Uterus (tissue), 4 donors: ENCODE measurements at regions of chr22 and their contacts with region 1.

Region 1: GRCh38 chr22:27654546-27655445 is 146.8 kb downstream of the MN1 start:
- DNase-seq: no peak
- H3K4me3 ChIP-seq: no peak overlapping the region
- H3K27ac ChIP-seq: no peak overlapping the region
- H3K4me1 ChIP-seq: no peaks in the 10 kb centered on the region
- H3K27me3 ChIP-seq: no peaks in the 10 kb centered on the region
- CTCF ChIP-seq: no peak
- POLR2A ChIP-seq: no peak

Region 2: DNA sequence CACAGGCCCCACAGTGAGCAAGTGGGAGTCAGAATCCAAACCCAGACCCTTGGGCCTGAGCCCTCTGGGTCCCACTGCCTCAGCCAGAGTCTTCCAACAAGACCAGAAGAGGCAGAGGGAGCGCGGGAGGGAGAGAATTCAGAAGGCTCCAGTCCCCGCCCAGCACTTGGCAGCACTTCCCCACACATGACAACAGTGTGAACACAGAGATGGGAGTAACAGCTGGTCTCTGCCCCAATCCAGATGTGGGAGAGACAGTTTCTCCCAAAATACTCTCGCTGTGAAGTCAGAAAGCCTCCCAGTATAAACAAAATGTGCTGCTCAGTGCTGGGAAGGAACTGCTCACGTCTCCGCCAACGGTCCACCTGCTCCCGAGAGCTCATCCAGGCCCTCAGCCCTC is 73.1 kb before region 1 on chr22:
- intact Hi-C with region 1: no loop called
- DNase-seq: peak; percentile 77 to 87
- H3K4me3 ChIP-seq: no peak overlapping the region
- H3K27ac ChIP-seq: peak overlapping the region in 1 of 2 donors; percentile 48
- H3K4me1 ChIP-seq: peaks cover 0 to 4% of the 10 kb centered on the region in 2 donors
- H3K27me3 ChIP-seq: no peaks in the 10 kb centered on the region
- CTCF ChIP-seq: no peak
- POLR2A ChIP-seq: no peak

Region 3: GRCh38 chr22:27718186-27719032 is 63.6 kb after region 1 on chr22:
- intact Hi-C with region 1: loop called (anchors 10 kb)
- DNase-seq: peak; percentile 58 to 72
- H3K4me3 ChIP-seq: no peak overlapping the region
- H3K27ac ChIP-seq: peak overlapping the region; percentile 4 to 40
- H3K4me1 ChIP-seq: no peaks in the 10 kb centered on the region
- H3K27me3 ChIP-seq: no peaks in the 10 kb centered on the region
- CTCF ChIP-seq: no peak
- POLR2A ChIP-seq: no peak